Naive thymus-derived CD4-positive, alpha-beta T cell (primary cell): ENCODE measurements at regions of chr12 and their contacts with region 1.

Region 1: GRCh38 chr12:47949441-47950308 is 13.7 kb upstream of the TMEM106C start:
- DNase-seq: peak in 7 of 9 donors; percentile 22 to 67 (median 45)
- ATAC-seq: peak; percentile 72
- H3K4me3 ChIP-seq: no peak overlapping the region
- H3K4me3 Mint-ChIP-seq: no peak overlapping the region
- H3K27ac ChIP-seq: no peak overlapping the region
- H3K27ac Mint-ChIP-seq: peak overlapping the region in 1 of 9 donors; percentile 38
- H3K4me1 ChIP-seq: no peaks in the 10 kb centered on the region
- H3K4me1 Mint-ChIP-seq: peaks cover 0 to 18% (median 0%) of the 10 kb centered on the region in 7 donors
- H3K27me3 ChIP-seq: no peaks in the 10 kb centered on the region
- H3K27me3 Mint-ChIP-seq: peaks cover 4 to 13% (median 5%) of the 10 kb centered on the region in 5 donors

Region 2: DNA sequence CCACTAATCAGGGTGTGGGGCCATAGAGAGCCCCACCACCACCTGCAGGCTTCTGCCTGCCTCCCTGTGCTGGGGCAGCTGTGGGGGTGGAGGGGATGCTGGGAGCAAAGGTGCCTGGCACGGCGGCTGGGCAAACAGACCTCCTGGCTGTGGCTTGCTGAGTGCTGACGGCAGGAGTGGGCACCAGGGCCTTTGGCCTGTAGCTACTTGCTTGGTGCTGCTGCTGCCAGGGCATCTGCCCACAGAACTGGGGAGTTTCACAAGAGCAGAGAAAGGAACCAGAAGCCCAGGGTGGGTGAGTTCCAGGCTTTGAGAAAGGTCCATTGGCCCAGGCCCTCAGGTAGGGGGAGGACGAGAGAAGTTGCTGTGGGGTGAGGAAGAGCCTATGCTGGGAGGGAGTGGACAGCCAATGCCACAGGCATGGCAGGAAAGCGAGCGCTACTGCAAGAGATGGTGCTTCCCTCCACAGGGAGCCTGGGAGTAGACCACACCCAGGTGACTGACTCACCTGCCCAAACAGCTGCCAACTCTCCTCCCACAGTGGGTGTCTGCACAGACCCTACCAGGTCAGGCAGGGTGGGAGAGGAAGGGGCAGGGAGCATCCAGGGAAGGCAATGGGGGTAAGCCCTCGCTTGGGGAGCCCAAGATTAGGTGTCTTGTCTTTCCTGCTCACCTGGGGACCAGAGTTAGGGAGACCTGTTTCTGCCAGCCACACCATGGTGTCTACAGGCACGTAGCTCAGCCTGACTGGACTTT is 91.0 kb before region 1 on chr12:
- CTCF ChIA-PET with region 1: no interaction called
- POLR2A ChIA-PET with region 1: no interaction called
- intact Hi-C with region 1: loop called in 1 of 2 experiments (anchors 5 kb)
- DNase-seq: no peak
- ATAC-seq: no peak
- H3K4me3 ChIP-seq: no peak overlapping the region
- H3K4me3 Mint-ChIP-seq: no peak overlapping the region
- H3K27ac ChIP-seq: no peak overlapping the region
- H3K27ac Mint-ChIP-seq: peak overlapping the region in 1 of 9 donors; percentile 7
- H3K4me1 ChIP-seq: no peaks in the 10 kb centered on the region
- H3K4me1 Mint-ChIP-seq: peaks cover 0 to 46% (median 4%) of the 10 kb centered on the region in 7 donors
- H3K27me3 ChIP-seq: no peaks in the 10 kb centered on the region
- H3K27me3 Mint-ChIP-seq: no peaks in the 10 kb centered on the region

Region 3: GRCh38 chr12:47882781-47883546 is 66.7 kb before region 1 on chr12:
- CTCF ChIA-PET with region 1: interaction called, 3 read pairs
- POLR2A ChIA-PET with region 1: interaction called, 3 read pairs
- intact Hi-C with region 1: loop called in 1 of 2 experiments (anchors 2 kb)
- DNase-seq: peak in 7 of 9 donors; percentile 30 to 60 (median 55)
- ATAC-seq: peak; percentile 71
- H3K4me3 ChIP-seq: peak overlapping the region; percentile 73
- H3K4me3 Mint-ChIP-seq: peak overlapping the region; percentile 84 to 95 (median 90)
- H3K27ac ChIP-seq: peak overlapping the region; percentile 50
- H3K27ac Mint-ChIP-seq: peak overlapping the region; percentile 72 to 99 (median 95)
- H3K4me1 ChIP-seq: peaks cover 14 to 38% of the 10 kb centered on the region in 2 donors
- H3K4me1 Mint-ChIP-seq: peaks cover 33 to 82% (median 54%) of the 10 kb centered on the region in 7 donors
- H3K27me3 ChIP-seq: no peaks in the 10 kb centered on the region
- H3K27me3 Mint-ChIP-seq: no peaks in the 10 kb centered on the region

Region 4: GRCh38 chr12:47910981-47911380 is 38.7 kb before region 1 on chr12:
- CTCF ChIA-PET with region 1: no interaction called
- POLR2A ChIA-PET with region 1: no interaction called
- intact Hi-C with region 1: no loop called
- DNase-seq: no peak
- ATAC-seq: no peak
- H3K4me3 ChIP-seq: no peak overlapping the region
- H3K4me3 Mint-ChIP-seq: no peak overlapping the region
- H3K27ac ChIP-seq: no peak overlapping the region
- H3K27ac Mint-ChIP-seq: peak overlapping the region in 1 of 9 donors; percentile 52
- H3K4me1 ChIP-seq: no peaks in the 10 kb centered on the region
- H3K4me1 Mint-ChIP-seq: peaks cover 0 to 2% (median under 1%) of the 10 kb centered on the region in 7 donors
- H3K27me3 ChIP-seq: no peaks in the 10 kb centered on the region
- H3K27me3 Mint-ChIP-seq: peaks cover 0 to 65% (median 6%) of the 10 kb centered on the region in 5 donors